ENCODE measurements at regions of chr5 and their contacts with region 1.

Region 1: GRCh38 chr5:132490486-132491367 is at the start of gene IRF1:
- DNase-seq: peak; percentile 97
- ATAC-seq: peak; percentile 68
- H3K4me3 Mint-ChIP-seq: peak within 1 kb of the TSS; percentile 96
- H3K27ac Mint-ChIP-seq: peak within 1 kb of the TSS; percentile 99
- H3K4me1 Mint-ChIP-seq: peaks cover 62% of the 10 kb centered on the region
- H3K27me3 Mint-ChIP-seq: no peaks in the 10 kb centered on the region
- CTCF ChIP-seq: no peak
- total RNA-seq, gene IRF1: 121 to 128 TPM

Region 2: GRCh38 chr5:132293066-132293991 is 197.4 kb before region 1 on chr5:
- CTCF ChIA-PET with region 1: no interaction called
- POLR2A ChIA-PET with region 1: interaction called, 12 read pairs
- intact Hi-C with region 1: no loop called
- DNase-seq: peak; percentile 92
- ATAC-seq: peak; percentile 54
- H3K4me3 Mint-ChIP-seq: peak overlapping the region; percentile 87
- H3K27ac Mint-ChIP-seq: peak overlapping the region; percentile 95
- H3K4me1 Mint-ChIP-seq: peaks cover 21% of the 10 kb centered on the region
- H3K27me3 Mint-ChIP-seq: peaks cover 8% of the 10 kb centered on the region
- CTCF ChIP-seq: no peak

Region 3: DNA sequence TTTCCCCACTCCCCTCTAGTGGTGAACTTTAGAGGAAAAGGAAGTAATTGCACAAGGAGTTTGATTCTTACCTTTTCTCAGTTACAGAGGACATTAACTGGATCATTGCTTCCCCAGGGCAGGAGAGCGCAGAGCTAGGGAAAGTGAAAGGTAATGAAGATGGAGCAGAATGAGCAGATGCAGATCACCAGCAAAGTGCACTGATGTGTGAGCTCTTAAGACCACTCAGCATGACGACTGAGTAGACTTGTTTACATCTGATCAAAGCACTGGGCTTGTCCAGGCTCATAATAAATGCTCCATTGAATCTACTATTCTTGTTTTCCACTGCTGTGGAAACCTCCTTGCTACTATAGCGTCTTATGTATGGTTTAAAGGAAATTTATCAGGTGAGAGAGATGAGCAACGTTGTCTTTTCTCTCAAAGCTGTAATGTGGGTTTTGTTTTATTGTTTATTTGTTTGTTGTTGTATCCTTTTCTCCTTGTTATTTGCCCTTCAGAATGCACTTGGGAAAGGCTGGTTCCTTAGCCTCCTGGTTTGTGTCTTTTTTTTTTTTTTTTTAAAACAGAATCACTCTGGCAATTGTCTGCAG is 96.0 kb before region 1 on chr5:
- CTCF ChIA-PET with region 1: interaction called, 342 read pairs
- POLR2A ChIA-PET with region 1: interaction called, 61 read pairs
- intact Hi-C with region 1: no loop called
- DNase-seq: no peak
- ATAC-seq: no peak
- H3K4me3 Mint-ChIP-seq: no peak overlapping the region
- H3K27ac Mint-ChIP-seq: no peak overlapping the region
- H3K4me1 Mint-ChIP-seq: peaks cover 55% of the 10 kb centered on the region
- H3K27me3 Mint-ChIP-seq: no peaks in the 10 kb centered on the region
- CTCF ChIP-seq: no peak

Region 4: GRCh38 chr5:132419502-132420468 is 70.9 kb before region 1 on chr5:
- CTCF ChIA-PET with region 1: interaction called, 67 read pairs
- POLR2A ChIA-PET with region 1: interaction called, 1,131 read pairs
- intact Hi-C with region 1: no loop called
- DNase-seq: peak; percentile 73
- ATAC-seq: peak; percentile 77
- H3K4me3 Mint-ChIP-seq: peak overlapping the region; percentile 49
- H3K27ac Mint-ChIP-seq: peak overlapping the region; percentile 84
- H3K4me1 Mint-ChIP-seq: peaks cover 88% of the 10 kb centered on the region
- H3K27me3 Mint-ChIP-seq: no peaks in the 10 kb centered on the region
- CTCF ChIP-seq: peak; percentile 93

Region 5: GRCh38 chr5:132446669-132447068 is 44.1 kb before region 1 on chr5:
- CTCF ChIA-PET with region 1: interaction called, 3 read pairs
- POLR2A ChIA-PET with region 1: interaction called, 1,131 read pairs
- intact Hi-C with region 1: no loop called
- DNase-seq: no peak
- ATAC-seq: no peak
- H3K4me3 Mint-ChIP-seq: no peak overlapping the region
- H3K27ac Mint-ChIP-seq: no peak overlapping the region
- H3K4me1 Mint-ChIP-seq: peaks cover 63% of the 10 kb centered on the region
- H3K27me3 Mint-ChIP-seq: no peaks in the 10 kb centered on the region
- CTCF ChIP-seq: no peak

Region 6: GRCh38 chr5:132473019-132473531 is 17.7 kb before region 1 on chr5:
- CTCF ChIA-PET with region 1: interaction called, 36 read pairs
- POLR2A ChIA-PET with region 1: interaction called, 1,641 read pairs
- intact Hi-C with region 1: no loop called
- DNase-seq: peak; percentile 91
- ATAC-seq: peak; percentile 94
- H3K4me3 Mint-ChIP-seq: no peak overlapping the region
- H3K27ac Mint-ChIP-seq: peak overlapping the region; percentile 78
- H3K4me1 Mint-ChIP-seq: peaks cover 72% of the 10 kb centered on the region
- H3K27me3 Mint-ChIP-seq: no peaks in the 10 kb centered on the region
- CTCF ChIP-seq: no peak

Region 7: GRCh38 chr5:132734687-132735086 is 244.0 kb after region 1 on chr5:
- CTCF ChIA-PET with region 1: no interaction called
- POLR2A ChIA-PET with region 1: no interaction called
- intact Hi-C with region 1: no loop called
- DNase-seq: no peak
- ATAC-seq: no peak
- H3K4me3 Mint-ChIP-seq: no peak overlapping the region
- H3K27ac Mint-ChIP-seq: no peak overlapping the region
- H3K4me1 Mint-ChIP-seq: peaks cover 31% of the 10 kb centered on the region
- H3K27me3 Mint-ChIP-seq: no peaks in the 10 kb centered on the region
- CTCF ChIP-seq: no peak

Region 8: DNA sequence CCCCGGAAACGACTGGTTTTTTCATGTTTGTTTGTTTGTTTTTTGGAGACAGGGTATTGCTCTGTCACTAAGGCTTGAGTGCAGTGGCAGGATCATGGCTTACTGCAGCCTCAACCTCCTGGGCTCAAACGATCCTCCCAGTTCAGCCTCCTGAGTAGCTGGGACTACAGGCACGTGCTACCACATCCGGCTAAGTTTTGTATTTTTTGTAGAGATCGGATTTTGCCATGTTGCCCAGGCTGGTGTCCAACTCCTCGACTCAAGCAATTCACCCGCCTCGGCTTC is 497.3 kb after region 1 on chr5:
- CTCF ChIA-PET with region 1: no interaction called
- POLR2A ChIA-PET with region 1: no interaction called
- intact Hi-C with region 1: no loop called
- DNase-seq: no peak
- ATAC-seq: no peak
- H3K4me3 Mint-ChIP-seq: no peak overlapping the region
- H3K27ac Mint-ChIP-seq: no peak overlapping the region
- H3K4me1 Mint-ChIP-seq: no peaks in the 10 kb centered on the region
- H3K27me3 Mint-ChIP-seq: no peaks in the 10 kb centered on the region
- CTCF ChIP-seq: no peak

Measured in activated CD8-positive, alpha-beta T cell treated with anti-CD3 and anti-CD28 coated beads for 36 hours (primary cell).